B cell (primary cell): ENCODE measurements at regions of chr14 and their contacts with region 1.

Region 1: DNA sequence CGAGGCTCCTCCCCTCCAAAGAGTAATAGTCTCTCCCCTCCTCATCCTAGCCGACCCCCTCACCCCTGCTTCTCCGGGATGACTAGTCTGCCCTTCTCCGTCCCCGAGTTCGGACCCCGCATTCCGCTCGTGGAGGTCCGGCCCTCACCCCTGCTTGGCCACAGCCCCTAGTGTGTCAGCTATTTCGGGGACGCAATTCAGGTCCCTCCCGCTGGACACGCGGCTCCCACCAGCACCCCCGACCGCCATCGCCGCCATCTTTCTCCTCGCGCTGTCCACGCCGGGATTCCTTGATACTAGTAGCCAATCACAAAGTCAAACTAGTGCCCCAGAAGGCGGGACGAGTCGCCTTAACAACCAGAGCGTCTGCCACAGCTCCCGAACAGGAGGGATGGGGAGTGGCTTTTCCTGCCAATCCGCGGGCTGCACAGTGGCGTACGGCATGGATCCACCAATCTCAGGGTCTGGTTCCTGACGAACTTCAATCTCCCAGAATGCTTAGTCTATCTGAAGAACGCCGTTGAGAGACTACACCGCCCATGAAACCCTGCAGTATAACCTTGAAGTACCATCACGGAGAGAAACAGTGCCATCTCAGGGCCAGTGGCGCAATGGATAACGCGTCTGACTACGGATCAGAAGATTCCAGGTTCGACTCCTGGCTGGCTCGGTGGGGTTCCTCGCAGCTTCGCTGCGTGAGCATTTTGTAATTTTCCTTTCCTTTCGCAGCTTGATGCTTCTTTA is at the start of gene PRMT5:
- DNase-seq: peak; percentile 100
- ATAC-seq: peak; percentile 94
- H3K4me3 ChIP-seq: peak within 1 kb of the TSS; percentile 64 to 100 (median 96)
- H3K4me3 Mint-ChIP-seq: no peak within 1 kb of the TSS
- H3K27ac ChIP-seq: peak within 1 kb of the TSS; percentile 65 to 86
- H3K27ac Mint-ChIP-seq: no peak within 1 kb of the TSS
- H3K4me1 ChIP-seq: peaks cover 13 to 23% of the 10 kb centered on the region in 2 donors
- H3K4me1 Mint-ChIP-seq: peaks cover 26% of the 10 kb centered on the region
- H3K27me3 ChIP-seq: no peaks in the 10 kb centered on the region
- H3K27me3 Mint-ChIP-seq: no peaks in the 10 kb centered on the region
- CTCF ChIP-seq: no peak
- total RNA-seq, gene PRMT5: 38.8 and 48.6 TPM in 2 replicates

Region 2: DNA sequence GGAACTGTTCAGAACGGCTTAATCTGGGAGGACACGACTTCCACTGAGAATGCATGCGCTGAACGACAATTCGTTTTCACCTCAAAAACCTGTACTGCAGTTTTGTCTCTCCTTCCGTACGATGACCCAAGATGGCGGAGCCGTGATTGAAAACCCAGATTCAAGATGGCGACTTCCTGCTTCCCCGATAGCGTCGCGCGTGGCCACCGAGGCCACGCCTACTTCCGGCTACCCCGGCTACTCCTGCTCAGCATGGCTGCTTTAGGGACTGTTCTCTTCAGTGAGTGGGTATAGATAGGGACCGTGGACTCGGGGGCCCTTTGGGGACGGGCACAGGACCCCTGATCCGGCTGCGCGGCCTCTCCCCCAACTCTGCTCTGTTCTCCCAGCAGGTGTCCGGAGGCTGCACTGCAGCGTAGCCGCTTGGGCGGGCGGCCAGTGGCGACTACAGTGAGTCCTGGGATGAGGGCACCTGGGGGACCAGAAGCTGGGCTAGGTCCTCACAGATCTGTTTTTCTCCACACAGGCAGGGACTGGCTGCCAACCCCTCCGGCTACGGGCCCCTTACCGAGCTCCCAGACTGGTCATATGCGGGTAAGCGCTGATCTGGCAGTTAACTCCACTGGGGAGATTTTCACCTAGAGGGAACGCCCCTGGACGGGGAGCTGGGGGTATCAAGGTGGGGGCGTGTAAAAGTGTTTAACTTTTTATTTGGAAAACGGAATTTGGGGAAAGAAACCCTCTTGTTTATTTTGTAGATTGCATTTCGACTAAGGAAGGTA is 99.4 kb before region 1 on chr14 and contains the start of gene MRPL52:
- CTCF ChIA-PET with region 1: no interaction called
- POLR2A ChIA-PET with region 1: no interaction called
- intact Hi-C with region 1: loop called (anchors 1 kb)
- DNase-seq: peak; percentile 95
- ATAC-seq: peak; percentile 94
- H3K4me3 ChIP-seq: peak within 1 kb of the TSS; percentile 68 to 92 (median 84)
- H3K4me3 Mint-ChIP-seq: peak within 1 kb of the TSS; percentile 84
- H3K27ac ChIP-seq: peak within 1 kb of the TSS; percentile 87 to 91
- H3K27ac Mint-ChIP-seq: peak within 1 kb of the TSS; percentile 93
- H3K4me1 ChIP-seq: peaks cover 18 to 22% of the 10 kb centered on the region in 2 donors
- H3K4me1 Mint-ChIP-seq: peaks cover 30% of the 10 kb centered on the region
- H3K27me3 ChIP-seq: no peaks in the 10 kb centered on the region
- H3K27me3 Mint-ChIP-seq: no peaks in the 10 kb centered on the region
- CTCF ChIP-seq: no peak
- total RNA-seq, gene MRPL52: 91.6 and 93.0 TPM in 2 replicates

Region 3: DNA sequence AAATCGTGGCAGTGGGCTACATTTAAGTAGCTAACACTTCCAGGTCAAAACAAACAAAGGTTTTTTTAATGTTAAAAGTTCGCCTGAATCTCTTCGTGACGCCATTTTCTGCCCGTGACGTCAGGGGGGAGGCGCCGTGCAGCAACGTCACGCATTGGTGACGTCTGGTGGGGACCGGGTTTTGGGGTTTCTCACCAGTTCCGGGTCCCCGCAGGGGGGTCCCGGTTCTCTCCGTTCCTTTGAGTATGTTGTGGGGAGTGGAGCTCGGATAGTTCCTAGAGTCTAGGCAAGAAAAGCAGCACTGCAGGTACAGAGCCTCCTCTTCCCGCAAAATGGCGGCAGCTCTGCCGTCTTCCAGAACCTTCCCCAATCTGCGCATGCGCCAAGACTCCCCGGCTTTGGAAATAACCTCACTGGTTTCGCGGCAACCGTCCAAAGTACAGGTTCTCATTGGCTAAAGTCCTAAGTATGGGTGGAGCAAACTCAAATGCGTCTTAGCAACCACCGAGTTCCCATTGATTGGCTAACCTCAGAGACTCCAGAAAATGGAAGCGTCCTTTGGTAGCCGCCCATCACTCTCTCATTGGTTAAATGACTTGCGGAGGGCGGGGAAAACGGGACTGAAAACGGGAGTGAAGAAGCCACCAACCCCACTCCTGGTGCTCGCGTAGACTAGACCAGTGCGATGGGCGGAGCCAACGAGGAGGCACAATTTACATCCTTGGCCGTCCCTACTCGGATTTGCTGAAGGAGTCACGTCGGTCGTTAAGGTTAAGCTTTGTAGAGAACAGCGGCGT is 10.3 kb before region 1 on chr14 and contains the start of gene RBM23:
- CTCF ChIA-PET with region 1: interaction called, 14 read pairs
- POLR2A ChIA-PET with region 1: interaction called, 22 read pairs
- intact Hi-C with region 1: loop called (anchors 1 kb)
- DNase-seq: peak; percentile 100
- ATAC-seq: peak; percentile 87
- H3K4me3 ChIP-seq: peak within 1 kb of the TSS; percentile 72 to 98 (median 96)
- H3K4me3 Mint-ChIP-seq: peak within 1 kb of the TSS; percentile 93
- H3K27ac ChIP-seq: peak within 1 kb of the TSS; percentile 98 to 99
- H3K27ac Mint-ChIP-seq: peak within 1 kb of the TSS; percentile 99
- H3K4me1 ChIP-seq: peaks cover 16 to 28% of the 10 kb centered on the region in 2 donors
- H3K4me1 Mint-ChIP-seq: peaks cover 38% of the 10 kb centered on the region
- H3K27me3 ChIP-seq: no peaks in the 10 kb centered on the region
- H3K27me3 Mint-ChIP-seq: no peaks in the 10 kb centered on the region
- CTCF ChIP-seq: no peak
- total RNA-seq, gene RBM23: 165 and 188 TPM in 2 replicates

Region 4: GRCh38 chr14:22973217-22974032 is 44.1 kb after region 1 on chr14:
- CTCF ChIA-PET with region 1: interaction called, 16 read pairs
- POLR2A ChIA-PET with region 1: no interaction called
- intact Hi-C with region 1: no loop called
- DNase-seq: peak; percentile 69
- ATAC-seq: peak; percentile 54
- H3K4me3 ChIP-seq: no peak overlapping the region
- H3K4me3 Mint-ChIP-seq: no peak overlapping the region
- H3K27ac ChIP-seq: no peak overlapping the region
- H3K27ac Mint-ChIP-seq: no peak overlapping the region
- H3K4me1 ChIP-seq: peaks cover 0 to 5% of the 10 kb centered on the region in 2 donors
- H3K4me1 Mint-ChIP-seq: peaks cover 4% of the 10 kb centered on the region
- H3K27me3 ChIP-seq: peaks cover 0 to 5% (median 2%) of the 10 kb centered on the region in 4 experiments
- H3K27me3 Mint-ChIP-seq: peaks cover 15% of the 10 kb centered on the region
- CTCF ChIP-seq: peak; percentile 79

Region 5: GRCh38 chr14:23034483-23035302 is 105.4 kb after region 1 on chr14 and contains the start of gene PSMB5:
- CTCF ChIA-PET with region 1: no interaction called
- POLR2A ChIA-PET with region 1: no interaction called
- intact Hi-C with region 1: loop called (anchors 1 kb)
- DNase-seq: peak; percentile 96
- ATAC-seq: peak; percentile 92
- H3K4me3 ChIP-seq: peak within 1 kb of the TSS; percentile 62 to 100 (median 66)
- H3K4me3 Mint-ChIP-seq: peak within 1 kb of the TSS; percentile 86
- H3K27ac ChIP-seq: peak within 1 kb of the TSS; percentile 81 to 93
- H3K27ac Mint-ChIP-seq: peak within 1 kb of the TSS; percentile 93
- H3K4me1 ChIP-seq: peaks cover 14 to 20% of the 10 kb centered on the region in 2 donors
- H3K4me1 Mint-ChIP-seq: peaks cover 28% of the 10 kb centered on the region
- H3K27me3 ChIP-seq: no peaks in the 10 kb centered on the region
- H3K27me3 Mint-ChIP-seq: no peaks in the 10 kb centered on the region
- CTCF ChIP-seq: no peak
- total RNA-seq, gene PSMB5: 29.0 and 31.9 TPM in 2 replicates

Region 6: GRCh38 chr14:23539248-23540140 is 610.2 kb after region 1 on chr14:
- CTCF ChIA-PET with region 1: no interaction called
- POLR2A ChIA-PET with region 1: no interaction called
- intact Hi-C with region 1: no loop called
- DNase-seq: peak; percentile 55
- ATAC-seq: peak; percentile 74
- H3K4me3 ChIP-seq: no peak overlapping the region
- H3K4me3 Mint-ChIP-seq: no peak overlapping the region
- H3K27ac ChIP-seq: no peak overlapping the region
- H3K27ac Mint-ChIP-seq: no peak overlapping the region
- H3K4me1 ChIP-seq: no peaks in the 10 kb centered on the region
- H3K4me1 Mint-ChIP-seq: no peaks in the 10 kb centered on the region
- H3K27me3 ChIP-seq: peaks cover 0 to 5% (median 0%) of the 10 kb centered on the region in 4 experiments
- H3K27me3 Mint-ChIP-seq: peaks cover 3% of the 10 kb centered on the region
- CTCF ChIP-seq: peak; percentile 78

Region 7: GRCh38 chr14:23670481-23670880 is 741.2 kb after region 1 on chr14:
- CTCF ChIA-PET with region 1: no interaction called
- POLR2A ChIA-PET with region 1: no interaction called
- intact Hi-C with region 1: no loop called
- DNase-seq: no peak
- ATAC-seq: no peak
- H3K4me3 ChIP-seq: no peak overlapping the region
- H3K4me3 Mint-ChIP-seq: no peak overlapping the region
- H3K27ac ChIP-seq: no peak overlapping the region
- H3K27ac Mint-ChIP-seq: no peak overlapping the region
- H3K4me1 ChIP-seq: no peaks in the 10 kb centered on the region
- H3K4me1 Mint-ChIP-seq: no peaks in the 10 kb centered on the region
- H3K27me3 ChIP-seq: no peaks in the 10 kb centered on the region
- H3K27me3 Mint-ChIP-seq: peaks cover 14% of the 10 kb centered on the region
- CTCF ChIP-seq: no peak

Region 8: GRCh38 chr14:24895243-24895583 is 1965.9 kb after region 1 on chr14:
- CTCF ChIA-PET with region 1: no interaction called
- POLR2A ChIA-PET with region 1: no interaction called
- intact Hi-C with region 1: no loop called
- DNase-seq: no peak
- ATAC-seq: no peak
- H3K4me3 ChIP-seq: no peak overlapping the region
- H3K4me3 Mint-ChIP-seq: no peak overlapping the region
- H3K27ac ChIP-seq: no peak overlapping the region
- H3K27ac Mint-ChIP-seq: no peak overlapping the region
- H3K4me1 ChIP-seq: no peaks in the 10 kb centered on the region
- H3K4me1 Mint-ChIP-seq: no peaks in the 10 kb centered on the region
- H3K27me3 ChIP-seq: no peaks in the 10 kb centered on the region
- H3K27me3 Mint-ChIP-seq: peaks cover 4% of the 10 kb centered on the region
- CTCF ChIP-seq: no peak